Activated CD4-positive, alpha-beta T cell treated with anti-CD3 and anti-CD28 coated beads for 36 hours (primary cell): ENCODE measurements at regions of chr17 and their contacts with region 1.

Region 1: DNA sequence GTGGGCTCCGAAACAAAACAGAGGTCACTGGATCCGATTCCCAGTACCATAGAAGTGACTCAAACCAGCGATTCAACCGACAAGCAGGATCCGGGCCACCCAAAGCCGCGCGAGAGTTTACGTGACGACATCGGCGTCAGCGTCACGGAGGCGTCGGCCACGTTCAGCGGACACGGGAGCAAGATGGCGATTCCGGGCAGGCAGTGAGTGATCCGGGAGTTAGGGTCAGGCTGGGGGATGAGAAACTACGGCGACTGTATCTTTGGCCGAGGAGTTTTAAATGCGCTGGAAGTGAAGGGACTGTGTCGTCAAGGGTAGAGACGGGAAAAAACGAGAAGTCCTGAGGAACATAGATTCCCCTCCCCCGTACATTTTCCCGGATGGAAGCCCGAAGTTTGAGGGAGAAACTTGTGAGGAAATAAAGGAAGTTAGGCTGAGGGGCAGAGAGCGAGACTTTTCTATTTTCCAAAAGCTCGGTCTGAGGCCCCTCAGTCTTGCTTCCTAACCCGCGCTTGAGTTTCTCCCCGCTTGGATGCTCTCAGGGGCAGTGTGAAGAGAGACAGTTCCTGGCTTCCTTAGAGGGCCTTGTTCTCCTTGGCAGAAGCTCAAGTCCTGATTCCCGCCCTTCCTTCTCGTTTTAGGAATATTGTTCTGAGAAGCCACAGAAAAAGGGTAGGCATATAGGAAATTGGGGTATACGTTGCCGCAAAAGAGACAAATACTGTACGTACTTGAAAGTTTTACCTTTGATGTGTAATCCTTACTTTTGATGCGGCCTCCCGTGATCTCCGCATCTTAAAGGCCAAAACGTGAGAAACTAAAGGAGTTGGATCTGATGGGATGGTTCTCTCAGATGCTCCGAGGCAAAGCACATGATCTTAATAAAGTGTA is at the start of gene NSRP1:
- DNase-seq: peak; percentile 97
- ATAC-seq: peak; percentile 95
- H3K4me3 Mint-ChIP-seq: peak within 1 kb of the TSS; percentile 90
- H3K27ac Mint-ChIP-seq: peak within 1 kb of the TSS; percentile 98
- H3K4me1 Mint-ChIP-seq: peaks cover 41% of the 10 kb centered on the region
- H3K27me3 Mint-ChIP-seq: no peaks in the 10 kb centered on the region
- total RNA-seq, gene NSRP1: 29.9 to 43.0 TPM

Region 2: GRCh38 chr17:29622337-29623282 is 494.3 kb before region 1 on chr17 and contains the start of gene CORO6:
- CTCF ChIA-PET with region 1: no interaction called
- POLR2A ChIA-PET with region 1: no interaction called
- intact Hi-C with region 1: loop called in 1 of 2 experiments (anchors 10 kb)
- DNase-seq: peak; percentile 83
- ATAC-seq: peak; percentile 55
- H3K4me3 Mint-ChIP-seq: peak within 1 kb of the TSS; percentile 62
- H3K27ac Mint-ChIP-seq: peak within 1 kb of the TSS; percentile 91
- H3K4me1 Mint-ChIP-seq: peaks cover 52% of the 10 kb centered on the region
- H3K27me3 Mint-ChIP-seq: no peaks in the 10 kb centered on the region
- total RNA-seq, gene CORO6: 13.9 to 14.2 TPM

Region 3: GRCh38 chr17:30104575-30105339 is 12.1 kb before region 1 on chr17:
- CTCF ChIA-PET with region 1: interaction called, 30 read pairs
- POLR2A ChIA-PET with region 1: interaction called, 7 read pairs
- intact Hi-C with region 1: no loop called
- DNase-seq: peak; percentile 81
- ATAC-seq: peak; percentile 97
- H3K4me3 Mint-ChIP-seq: peak overlapping the region; percentile 67
- H3K27ac Mint-ChIP-seq: peak overlapping the region; percentile 24
- H3K4me1 Mint-ChIP-seq: peaks cover 5% of the 10 kb centered on the region
- H3K27me3 Mint-ChIP-seq: peaks cover 2% of the 10 kb centered on the region

Region 4: GRCh38 chr17:30378824-30379302 is 262.0 kb after region 1 on chr17 and contains the start of gene CPD:
- CTCF ChIA-PET with region 1: no interaction called
- POLR2A ChIA-PET with region 1: no interaction called
- intact Hi-C with region 1: loop called (anchors 1 to 5 kb)
- DNase-seq: peak; percentile 98
- ATAC-seq: peak; percentile 87
- H3K4me3 Mint-ChIP-seq: peak within 1 kb of the TSS; percentile 82
- H3K27ac Mint-ChIP-seq: peak within 1 kb of the TSS; percentile 80
- H3K4me1 Mint-ChIP-seq: peaks cover 63% of the 10 kb centered on the region
- H3K27me3 Mint-ChIP-seq: no peaks in the 10 kb centered on the region
- total RNA-seq, gene CPD: 29.0 to 36.3 TPM

Region 5: GRCh38 chr17:31858642-31859473 is 1742.0 kb after region 1 on chr17 and contains the start of gene COPRS:
- CTCF ChIA-PET with region 1: no interaction called
- POLR2A ChIA-PET with region 1: no interaction called
- intact Hi-C with region 1: no loop called
- DNase-seq: peak; percentile 91
- ATAC-seq: peak; percentile 77
- H3K4me3 Mint-ChIP-seq: peak within 1 kb of the TSS; percentile 84
- H3K27ac Mint-ChIP-seq: peak within 1 kb of the TSS; percentile 86
- H3K4me1 Mint-ChIP-seq: peaks cover 19% of the 10 kb centered on the region
- H3K27me3 Mint-ChIP-seq: no peaks in the 10 kb centered on the region
- total RNA-seq, gene COPRS: 35.0 to 41.3 TPM